Sigmoid colon (tissue), 7 donors: ENCODE measurements at regions of chr1 and their contacts with region 1.

Region 1: DNA sequence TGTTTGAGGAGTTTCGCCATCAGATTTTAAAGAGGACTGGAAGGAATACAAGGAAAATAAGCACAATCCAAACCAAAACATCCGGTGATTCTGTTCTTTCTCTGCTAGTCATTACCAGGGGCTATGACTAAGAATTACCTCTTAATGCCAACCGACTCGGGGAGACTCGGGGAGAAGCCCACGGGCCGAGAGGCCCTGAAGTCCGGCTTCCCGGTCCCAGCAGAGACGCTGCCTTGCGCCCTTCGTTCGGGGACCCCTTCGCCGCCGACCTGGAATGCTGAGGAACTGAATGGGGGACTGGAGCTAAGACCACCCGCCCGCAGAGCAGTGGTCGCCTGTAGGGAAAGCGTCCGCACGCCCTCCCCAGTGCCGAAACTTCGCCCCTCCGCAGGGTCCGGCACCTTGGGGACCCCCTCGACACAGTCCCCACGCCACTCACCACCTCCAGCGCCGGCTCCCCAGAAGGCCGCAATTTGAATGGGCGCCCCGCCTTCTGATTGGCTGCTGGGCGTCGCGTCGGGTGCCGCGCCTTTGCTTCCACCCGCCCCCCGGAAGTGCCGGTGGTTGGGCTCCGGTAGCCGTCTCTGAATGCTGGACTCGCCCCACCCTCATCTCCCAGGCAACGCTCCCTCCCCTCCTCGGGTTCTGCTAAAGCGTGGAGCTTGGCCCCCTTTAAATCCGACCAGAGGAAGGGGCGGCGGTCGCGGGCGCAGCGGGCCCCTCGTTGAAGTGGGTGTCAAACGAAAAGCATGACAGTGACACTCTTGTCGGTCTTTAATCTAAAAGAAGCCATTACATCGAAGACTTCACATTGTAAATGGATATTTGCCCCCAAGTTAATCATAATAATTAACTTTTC is at the start of gene KIF14:
- DNase-seq: peak; percentile 95
- H3K4me3 ChIP-seq: peak within 1 kb of the TSS; percentile 45 to 65 (median 60)
- H3K27ac ChIP-seq: peak within 1 kb of the TSS; percentile 37 to 66 (median 50)
- H3K4me1 ChIP-seq: peaks cover 0 to 19% (median 8%) of the 10 kb centered on the region in 4 donors
- H3K27me3 ChIP-seq: no peaks in the 10 kb centered on the region
- CTCF ChIP-seq: no peak
- EP300 ChIP-seq: no peak
- POLR2A ChIP-seq: no peak
- total RNA-seq, gene KIF14: under 0.01 to 0.28 (median 0.27) TPM in 3 of 4 donors, not detected in the other

Region 2: GRCh38 chr1:200372080-200372884 is 248.2 kb before region 1 on chr1:
- intact Hi-C with region 1: no loop called
- DNase-seq: no peak
- H3K4me3 ChIP-seq: no peak overlapping the region
- H3K27ac ChIP-seq: peak overlapping the region in 2 of 4 donors; percentile 33 to 67
- H3K4me1 ChIP-seq: peaks cover 0 to 46% (median 13%) of the 10 kb centered on the region in 4 donors
- H3K27me3 ChIP-seq: no peaks in the 10 kb centered on the region
- CTCF ChIP-seq: no peak
- EP300 ChIP-seq: no peak
- POLR2A ChIP-seq: no peak

Region 3: DNA sequence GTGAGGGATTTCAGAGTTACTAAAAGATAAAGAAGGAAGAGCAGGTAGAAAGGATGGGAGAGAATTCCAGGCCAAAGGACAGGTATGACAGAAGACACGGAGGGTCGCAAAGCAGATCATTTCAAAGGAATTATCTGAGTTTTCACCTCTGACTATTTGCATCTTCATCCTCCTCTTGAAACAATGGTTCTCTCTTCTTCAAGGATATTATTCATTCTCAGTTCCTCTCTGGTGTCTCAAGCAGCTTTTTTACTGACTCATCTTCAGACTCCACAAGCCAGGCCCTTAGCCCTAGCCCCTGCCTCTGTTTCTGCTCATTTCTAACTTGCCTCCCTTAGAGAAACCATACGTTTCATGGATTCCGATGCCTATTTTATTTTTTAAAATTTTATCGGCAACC is 34.2 kb after region 1 on chr1:
- intact Hi-C with region 1: no loop called
- DNase-seq: no peak
- H3K4me3 ChIP-seq: no peak overlapping the region
- H3K27ac ChIP-seq: no peak overlapping the region
- H3K4me1 ChIP-seq: no peaks in the 10 kb centered on the region
- H3K27me3 ChIP-seq: no peaks in the 10 kb centered on the region
- CTCF ChIP-seq: no peak
- EP300 ChIP-seq: no peak
- POLR2A ChIP-seq: no peak

Region 4: GRCh38 chr1:200669314-200670241 is 49.1 kb after region 1 on chr1 and contains the start of gene DDX59:
- intact Hi-C with region 1: loop called (anchors 1 kb)
- DNase-seq: peak; percentile 98
- H3K4me3 ChIP-seq: peak within 1 kb of the TSS; percentile 67 to 99 (median 79)
- H3K27ac ChIP-seq: peak within 1 kb of the TSS; percentile 95 to 100 (median 98)
- H3K4me1 ChIP-seq: peaks cover 6 to 27% (median 26%) of the 10 kb centered on the region in 4 donors
- H3K27me3 ChIP-seq: no peaks in the 10 kb centered on the region
- CTCF ChIP-seq: no peak
- EP300 ChIP-seq: peak; percentile 3 to 69 (median 40)
- POLR2A ChIP-seq: peak; percentile 83 to 87
- total RNA-seq, gene DDX59: 24.0 to 29.6 (median 27.1) TPM

Region 5: DNA sequence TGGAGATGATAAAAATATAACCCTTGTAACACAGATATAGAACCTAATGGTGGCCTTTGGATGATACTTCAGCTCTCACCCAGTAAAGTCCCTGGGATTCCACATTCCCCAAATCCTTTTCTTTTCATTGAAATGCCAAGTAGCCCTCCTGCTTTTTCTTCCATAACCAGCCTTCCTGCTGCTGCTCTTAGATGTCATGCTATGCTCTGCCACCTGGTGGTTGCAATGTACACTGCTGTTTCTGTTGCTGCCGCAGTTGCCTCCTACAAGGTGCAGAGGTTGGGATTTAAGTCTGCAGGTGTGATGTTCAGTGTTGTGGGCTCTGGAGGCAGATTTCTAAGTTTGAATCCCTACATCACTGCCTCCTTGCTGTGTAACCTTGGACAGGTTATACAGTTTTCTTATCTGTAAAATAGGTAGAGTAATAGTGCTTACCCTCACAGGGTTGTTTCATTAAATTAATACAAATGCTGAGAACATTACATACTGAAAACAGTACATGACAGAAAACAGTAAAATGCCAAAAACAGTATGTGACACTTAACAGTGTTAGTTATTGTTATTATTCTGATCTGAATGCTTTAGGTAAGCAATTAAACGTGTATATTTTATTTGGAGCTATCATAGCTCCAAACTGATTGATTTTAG is 182.5 kb after region 1 on chr1:
- intact Hi-C with region 1: loop called (anchors 2 kb)
- DNase-seq: peak; percentile 89
- H3K4me3 ChIP-seq: no peak overlapping the region
- H3K27ac ChIP-seq: no peak overlapping the region
- H3K4me1 ChIP-seq: peaks cover 0 to 21% (median 8%) of the 10 kb centered on the region in 4 donors
- H3K27me3 ChIP-seq: no peaks in the 10 kb centered on the region
- CTCF ChIP-seq: peak; percentile 84 to 98 (median 90)
- EP300 ChIP-seq: no peak
- POLR2A ChIP-seq: no peak

Region 6: DNA sequence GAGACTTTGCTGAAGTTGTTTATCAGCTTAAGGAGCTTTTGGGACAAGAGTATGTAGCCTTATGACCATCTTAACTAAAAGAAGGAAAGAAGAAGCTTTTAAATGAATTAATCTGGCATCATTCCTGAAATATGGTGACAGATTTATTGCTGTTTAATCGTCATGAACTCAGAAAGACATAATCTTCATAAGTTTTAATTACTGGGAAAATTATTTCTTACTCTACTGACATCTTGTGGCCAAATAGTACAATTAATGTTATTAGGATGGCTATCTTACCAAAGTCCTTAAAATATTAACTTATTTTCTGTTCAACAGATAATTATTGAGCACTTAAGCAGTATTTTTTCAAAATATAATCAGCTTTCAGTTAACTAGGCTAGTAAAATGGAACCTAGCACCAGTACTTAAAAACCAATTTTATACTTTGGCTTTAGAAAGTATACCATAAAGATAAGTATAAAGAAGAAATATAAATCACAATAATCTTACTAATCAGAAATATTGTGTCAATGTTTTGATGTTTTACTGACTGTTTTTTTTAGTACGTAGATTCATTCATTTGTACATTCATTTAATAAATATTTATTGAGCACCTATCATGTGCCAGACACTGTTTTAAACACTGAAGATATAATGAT is 217.5 kb after region 1 on chr1:
- intact Hi-C with region 1: loop called (anchors 10 kb)
- DNase-seq: no peak
- H3K4me3 ChIP-seq: no peak overlapping the region
- H3K27ac ChIP-seq: no peak overlapping the region
- H3K4me1 ChIP-seq: peaks cover 0 to 7% (median 0%) of the 10 kb centered on the region in 4 donors
- H3K27me3 ChIP-seq: no peaks in the 10 kb centered on the region
- CTCF ChIP-seq: peak in 2 of 4 experiments; percentile 20 to 47
- EP300 ChIP-seq: no peak
- POLR2A ChIP-seq: no peak